ENCODE measurements at regions of chr12 and their contacts with region 1.

Region 1: DNA sequence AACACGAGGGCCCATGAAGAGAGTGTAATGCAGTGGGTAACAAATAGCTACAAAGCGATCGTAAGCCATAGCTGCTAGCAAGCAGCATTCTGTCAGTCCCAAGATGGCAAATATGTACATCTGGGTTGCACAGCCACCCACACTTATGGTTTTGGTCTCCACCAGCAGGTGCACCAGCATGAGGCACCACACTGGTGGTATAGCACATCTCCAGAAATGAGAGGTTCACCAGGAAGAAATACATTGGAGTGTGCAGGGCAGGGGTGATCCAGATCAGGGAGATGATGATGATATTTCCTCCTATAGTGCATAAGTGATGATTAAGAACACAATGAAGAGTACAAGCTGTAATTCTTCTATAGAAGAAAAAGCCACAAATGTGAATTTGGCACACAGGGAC is 26.4 kb upstream of the OR10A7 start:
- DNase-seq: no peak
- H3K4me3 ChIP-seq: no peak overlapping the region
- H3K27ac ChIP-seq: no peak overlapping the region
- H3K4me1 ChIP-seq: no peaks in the 10 kb centered on the region
- H3K27me3 ChIP-seq: peaks cover 0 to 17% (median 0%) of the 10 kb centered on the region in 4 donors
- CTCF ChIP-seq: no peak
- POLR2A ChIP-seq: no peak

Region 2: GRCh38 chr12:54958048-54958658 is 236.2 kb before region 1 on chr12:
- intact Hi-C with region 1: no loop called
- DNase-seq: no peak
- H3K4me3 ChIP-seq: no peak overlapping the region
- H3K27ac ChIP-seq: no peak overlapping the region
- H3K4me1 ChIP-seq: no peaks in the 10 kb centered on the region
- H3K27me3 ChIP-seq: peaks cover 0 to 8% (median 0%) of the 10 kb centered on the region in 4 donors
- CTCF ChIP-seq: peak in 5 of 6 experiments; percentile 61 to 80 (median 67)
- POLR2A ChIP-seq: no peak

Region 3: GRCh38 chr12:55619354-55620138 is 425.2 kb after region 1 on chr12:
- intact Hi-C with region 1: loop called (anchors 5 kb)
- DNase-seq: no peak
- H3K4me3 ChIP-seq: no peak overlapping the region
- H3K27ac ChIP-seq: no peak overlapping the region
- H3K4me1 ChIP-seq: peaks cover 0 to 6% (median 0%) of the 10 kb centered on the region in 3 donors
- H3K27me3 ChIP-seq: peaks cover 0 to 4% (median 0%) of the 10 kb centered on the region in 4 donors
- CTCF ChIP-seq: peak; percentile 71 to 87 (median 82)
- POLR2A ChIP-seq: no peak

Measured in esophagus squamous epithelium (tissue), 5 donors.